ENCODE measurements at regions of chr1 and their contacts with region 1.

Region 1: DNA sequence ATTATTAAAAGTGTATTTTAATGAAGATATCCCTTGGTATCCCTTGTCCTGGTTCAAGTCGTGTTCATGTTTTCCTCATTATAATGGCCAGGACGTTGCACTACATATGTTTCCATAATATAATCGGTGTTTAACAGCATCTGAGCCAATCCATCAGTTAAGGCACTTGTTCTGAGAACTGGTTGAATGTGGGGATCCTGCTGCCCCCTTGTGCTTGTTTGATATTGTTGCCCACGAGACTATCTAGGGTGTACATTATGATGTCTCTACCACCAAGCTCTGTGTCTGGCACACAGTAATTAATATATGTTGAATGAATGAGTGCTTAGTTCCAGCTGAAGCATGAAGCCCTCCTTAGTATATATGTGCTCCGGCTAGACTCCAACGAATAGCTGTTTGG is 193.0 kb downstream of the CACNA1E start:
- DNase-seq: peak; percentile 51
- H3K4me3 ChIP-seq: no peak overlapping the region
- H3K27ac ChIP-seq: no peak overlapping the region
- H3K4me1 ChIP-seq: no peaks in the 10 kb centered on the region
- H3K27me3 ChIP-seq: no peaks in the 10 kb centered on the region
- CTCF ChIP-seq: peak; percentile 36

Region 2: DNA sequence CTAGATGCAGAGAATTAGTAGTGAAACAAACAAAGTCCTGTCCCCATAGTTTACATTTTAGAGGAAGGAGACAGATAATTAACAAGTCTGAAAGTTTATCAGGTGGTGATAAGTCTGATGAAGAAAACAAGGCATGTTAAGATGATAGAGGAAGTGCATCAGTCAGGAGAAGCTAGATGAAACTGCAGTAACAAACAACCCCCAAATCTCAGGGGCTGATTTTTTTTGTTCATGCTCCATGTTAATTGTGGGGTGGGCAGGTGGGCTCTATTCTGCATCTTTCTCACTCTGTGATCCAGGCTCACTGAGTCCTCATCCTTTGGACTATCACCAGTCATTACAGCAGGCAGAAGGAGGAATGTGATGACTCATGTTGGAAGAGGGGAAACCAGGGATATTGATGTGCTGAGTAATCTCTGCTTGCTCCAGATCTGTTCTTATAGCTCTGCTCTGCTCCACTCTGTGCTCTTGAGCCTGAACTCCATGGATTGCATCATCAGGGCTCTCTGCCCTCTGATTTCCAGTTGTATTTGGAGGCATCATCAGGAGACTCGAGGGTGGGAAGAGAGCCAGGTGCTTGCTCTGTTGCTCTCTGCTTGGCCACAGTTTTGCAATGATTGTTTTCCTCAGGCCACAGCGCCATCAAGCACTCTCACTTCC is 420.9 kb before region 1 on chr1:
- intact Hi-C with region 1: no loop called
- DNase-seq: no peak
- H3K4me3 ChIP-seq: no peak overlapping the region
- H3K27ac ChIP-seq: no peak overlapping the region
- H3K4me1 ChIP-seq: no peaks in the 10 kb centered on the region
- H3K27me3 ChIP-seq: no peaks in the 10 kb centered on the region
- CTCF ChIP-seq: no peak

Region 3: GRCh38 chr1:181743878-181744312 is 67.6 kb after region 1 on chr1:
- intact Hi-C with region 1: no loop called
- DNase-seq: no peak
- H3K4me3 ChIP-seq: no peak overlapping the region
- H3K27ac ChIP-seq: no peak overlapping the region
- H3K4me1 ChIP-seq: no peaks in the 10 kb centered on the region
- H3K27me3 ChIP-seq: no peaks in the 10 kb centered on the region
- CTCF ChIP-seq: no peak

Region 4: DNA sequence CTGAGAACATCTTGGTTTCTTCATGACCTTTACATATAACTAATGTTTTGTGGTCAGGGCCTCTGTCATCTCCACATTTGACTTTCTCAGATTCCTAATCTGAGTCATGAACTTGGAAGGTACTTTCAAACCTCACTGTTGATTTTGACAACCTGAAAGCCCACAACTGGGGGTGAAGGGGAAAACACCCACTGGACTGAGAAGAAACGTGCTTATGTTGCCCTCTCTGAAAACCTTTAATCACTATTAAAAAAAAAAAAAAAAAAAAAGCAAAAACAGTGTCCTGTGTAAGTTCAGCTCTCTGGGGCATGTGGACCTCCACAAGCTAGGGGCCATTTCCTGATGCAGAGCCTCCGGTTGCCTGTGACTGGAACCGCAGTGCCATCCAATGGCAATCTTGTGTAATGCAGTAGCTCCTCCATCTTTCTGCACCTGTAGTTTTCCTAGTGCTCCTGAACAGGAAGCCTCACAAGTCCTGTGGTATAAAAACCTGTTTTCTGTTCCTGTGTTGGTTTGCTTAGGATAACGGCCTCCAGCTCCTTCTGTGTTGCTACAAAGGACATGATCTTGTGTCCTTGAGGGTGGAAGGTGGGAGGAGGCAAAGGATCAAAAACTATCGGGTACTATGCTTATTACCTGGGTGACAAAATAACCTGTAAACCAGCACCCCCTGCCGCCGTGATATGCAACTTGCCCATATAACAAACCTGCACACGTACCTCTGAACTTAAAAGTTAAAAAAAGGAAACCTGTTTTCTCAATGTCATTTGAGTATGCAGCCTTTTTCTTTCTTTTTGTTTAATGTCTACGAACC is 260.7 kb after region 1 on chr1:
- intact Hi-C with region 1: loop called (anchors 10 kb)
- DNase-seq: peak; percentile 52
- H3K4me3 ChIP-seq: no peak overlapping the region
- H3K27ac ChIP-seq: no peak overlapping the region
- H3K4me1 ChIP-seq: no peaks in the 10 kb centered on the region
- H3K27me3 ChIP-seq: no peaks in the 10 kb centered on the region
- CTCF ChIP-seq: peak; percentile 26

Measured in colonic mucosa (tissue), 4 donors.